ENCODE measurements at regions of chr20 and their contacts with region 1.

Region 1: GRCh38 chr20:17995967-17996819 is 27.4 kb downstream of the MGME1 start:
- DNase-seq: no peak
- H3K4me3 ChIP-seq: no peak overlapping the region
- CTCF ChIP-seq: peak; percentile 79

Region 2: GRCh38 chr20:17968366-17969279 is 27.6 kb before region 1 on chr20 and contains the starts of genes MGME1 and SNX5:
- CTCF ChIA-PET with region 1: interaction called, 12 read pairs
- POLR2A ChIA-PET with region 1: interaction called, 5 read pairs
- DNase-seq: peak; percentile 95
- H3K4me3 ChIP-seq: peak within 1 kb of the TSS; percentile 93
- CTCF ChIP-seq: no peak

Region 3: GRCh38 chr20:17985388-17986018 is 10.7 kb before region 1 on chr20:
- CTCF ChIA-PET with region 1: interaction called, 63 read pairs
- POLR2A ChIA-PET with region 1: no interaction called
- DNase-seq: no peak
- H3K4me3 ChIP-seq: no peak overlapping the region
- CTCF ChIP-seq: no peak

Measured in AG04449 (cell line).